Adrenal gland (tissue), 19 donors: ENCODE measurements at regions of chr16 and their contacts with region 1.

Region 1: GRCh38 chr16:1772736-1773584 is at the starts of genes EME2 and MRPS34:
- DNase-seq: peak; percentile 80 to 89 (median 84)
- H3K4me3 ChIP-seq: peak within 1 kb of the TSS; percentile 11 to 99 (median 64)
- H3K27ac ChIP-seq: peak within 1 kb of the TSS; percentile 79 to 93 (median 91)
- H3K4me1 ChIP-seq: peaks cover 26 to 36% of the 10 kb centered on the region in 2 donors
- H3K27me3 ChIP-seq: no peaks in the 10 kb centered on the region
- CTCF ChIP-seq: peak; percentile 53 to 86 (median 72)
- POLR2A ChIP-seq: peak; percentile 56
- total RNA-seq, gene EME2: 5.7 to 30.6 (median 16.1) TPM
- total RNA-seq, gene MRPS34: 130 to 226 (median 143) TPM

Region 2: DNA sequence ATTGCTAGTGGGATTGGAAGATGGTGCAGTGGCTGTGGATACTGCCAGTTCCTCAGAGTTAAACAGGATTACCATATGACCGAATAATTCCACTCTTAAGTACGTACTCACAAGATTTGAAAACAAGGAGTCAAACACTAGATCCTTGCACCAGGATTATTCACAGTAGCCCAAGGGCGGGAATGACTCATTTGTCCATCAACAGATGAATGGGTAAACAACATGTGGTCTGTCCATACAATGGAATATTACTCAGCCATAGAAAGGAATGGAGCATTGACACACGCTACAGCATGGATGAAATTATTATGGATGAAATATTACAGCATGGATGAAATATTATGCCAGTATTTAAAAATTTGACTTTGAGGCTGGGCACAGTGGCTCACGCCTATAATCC is 76.1 kb before region 1 on chr16:
- intact Hi-C with region 1: no loop called
- DNase-seq: no peak
- H3K4me3 ChIP-seq: no peak overlapping the region
- H3K27ac ChIP-seq: no peak overlapping the region
- H3K4me1 ChIP-seq: peaks cover 0 to 3% of the 10 kb centered on the region in 2 donors
- H3K27me3 ChIP-seq: no peaks in the 10 kb centered on the region
- CTCF ChIP-seq: no peak
- POLR2A ChIP-seq: no peak

Region 3: GRCh38 chr16:1812732-1813163 is 39.8 kb after region 1 on chr16:
- intact Hi-C with region 1: no loop called
- DNase-seq: peak; percentile 37 to 80 (median 61)
- H3K4me3 ChIP-seq: no peak overlapping the region
- H3K27ac ChIP-seq: no peak overlapping the region
- H3K4me1 ChIP-seq: no peaks in the 10 kb centered on the region
- H3K27me3 ChIP-seq: no peaks in the 10 kb centered on the region
- CTCF ChIP-seq: peak in 5 of 6 experiments; percentile 26 to 45 (median 38)
- POLR2A ChIP-seq: no peak

Region 4: GRCh38 chr16:1826691-1827575 is 54.0 kb after region 1 on chr16 and contains the starts of genes FAHD1 and HAGH:
- intact Hi-C with region 1: loop called in 1 of 2 experiments (anchors 5 kb)
- DNase-seq: peak; percentile 93 to 97 (median 95)
- H3K4me3 ChIP-seq: peak within 1 kb of the TSS; percentile 62 to 99 (median 86)
- H3K27ac ChIP-seq: peak within 1 kb of the TSS; percentile 72 to 98 (median 86)
- H3K4me1 ChIP-seq: peaks cover 40 to 59% of the 10 kb centered on the region in 2 donors
- H3K27me3 ChIP-seq: no peaks in the 10 kb centered on the region
- CTCF ChIP-seq: peak in 1 of 6 experiments; percentile 3
- POLR2A ChIP-seq: peak in 1 of 2 donors; percentile 60
- total RNA-seq, gene FAHD1: 38.7 to 140 (median 51.9) TPM
- total RNA-seq, gene HAGH: 77.1 to 318 (median 182) TPM